MCF 10A (cell line): ENCODE measurements at regions of chr2 and their contacts with region 1.

Region 1: DNA sequence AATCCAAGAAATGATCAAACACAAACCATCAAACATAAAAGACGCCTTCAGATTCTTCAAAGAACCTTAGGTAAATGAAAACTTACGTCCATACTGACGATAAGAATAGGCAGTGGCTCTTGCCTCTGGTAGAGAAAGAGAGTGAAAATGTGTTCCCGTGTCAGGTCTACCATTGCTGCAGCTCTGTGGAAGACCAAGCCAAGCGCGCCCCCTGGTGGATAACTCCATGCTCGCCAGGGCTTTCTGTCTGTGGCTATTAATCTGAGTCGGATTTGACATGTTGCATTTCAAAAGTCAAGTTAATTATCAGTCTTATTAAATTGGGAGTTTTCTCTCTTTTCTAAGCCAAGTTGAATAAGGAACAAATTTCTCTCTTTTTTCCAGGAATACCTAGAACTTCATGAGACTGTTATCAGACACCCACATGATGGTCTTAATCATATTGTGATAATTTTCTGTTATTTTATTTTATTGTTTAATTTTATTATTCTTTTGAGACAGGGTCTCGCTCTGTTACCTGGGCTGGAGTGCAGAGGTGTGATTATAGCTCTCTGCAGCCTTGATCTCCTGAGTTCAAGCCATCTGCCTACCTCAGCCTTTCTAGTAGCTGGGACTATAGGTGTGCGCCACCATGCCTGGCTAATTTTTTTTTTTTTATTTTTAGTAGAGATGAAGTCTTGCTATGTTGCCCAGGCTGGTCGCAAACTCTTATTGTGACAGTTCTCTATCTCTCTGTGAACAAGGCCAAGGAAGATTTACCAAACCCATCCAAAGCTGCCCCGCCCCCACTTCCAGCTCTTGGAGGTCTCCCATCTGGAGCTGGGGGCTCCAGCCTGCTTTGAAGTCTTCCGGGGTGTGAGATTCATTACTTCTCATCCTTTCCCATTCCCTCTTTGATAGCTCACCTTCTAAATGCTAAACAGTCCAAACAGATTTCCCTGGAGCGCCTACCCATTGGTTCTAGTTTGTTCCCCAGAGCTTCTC is 15.8 kb upstream of the ZAP70 start:
- DNase-seq: peak; percentile 84
- H3K4me3 Mint-ChIP-seq: no peak overlapping the region
- H3K27ac Mint-ChIP-seq: no peak overlapping the region
- H3K4me1 Mint-ChIP-seq: peaks cover 14% of the 10 kb centered on the region
- H3K27me3 Mint-ChIP-seq: no peaks in the 10 kb centered on the region
- CTCF ChIP-seq: peak; percentile 92

Region 2: DNA sequence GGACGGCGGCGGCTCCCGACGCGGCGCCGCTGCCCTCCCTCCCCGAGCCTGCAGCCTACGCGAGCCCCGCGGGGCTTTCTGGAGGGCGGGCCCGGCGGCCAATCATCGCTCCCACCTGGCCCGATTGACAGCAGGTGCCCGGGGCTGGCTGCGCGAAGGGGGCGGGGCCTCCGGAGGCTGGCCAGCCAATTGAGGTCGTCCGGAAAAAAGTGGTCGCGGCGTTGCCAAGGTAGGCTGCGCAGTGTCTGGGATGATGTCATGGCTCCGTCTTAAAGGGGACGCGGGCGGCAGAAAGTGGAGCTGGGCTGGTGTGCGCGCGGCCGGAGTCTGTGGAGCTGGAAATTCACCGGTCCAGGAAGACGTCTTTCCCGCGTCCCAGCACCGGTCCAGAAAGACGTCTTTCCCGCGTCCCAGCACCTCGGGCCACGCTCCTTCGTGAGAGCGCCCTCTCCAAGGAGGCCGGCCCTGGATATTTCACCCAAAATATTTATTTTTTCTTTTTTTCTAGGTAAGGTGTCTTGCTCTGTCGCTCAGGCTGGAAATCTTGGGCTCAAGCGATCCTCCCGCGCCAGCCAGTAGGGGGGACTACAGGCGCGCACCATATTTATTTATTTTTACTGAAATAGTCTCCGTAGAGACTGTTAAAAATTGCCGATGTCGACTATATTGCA is 33.4 kb before region 1 on chr2 and contains the start of gene ACTR1B:
- CTCF ChIA-PET with region 1: interaction called, 65 read pairs
- POLR2A ChIA-PET with region 1: interaction called, 20 read pairs
- intact Hi-C with region 1: loop called (anchors 1 kb)
- DNase-seq: peak; percentile 98
- H3K4me3 Mint-ChIP-seq: peak within 1 kb of the TSS; percentile 88
- H3K27ac Mint-ChIP-seq: peak within 1 kb of the TSS; percentile 93
- H3K4me1 Mint-ChIP-seq: peaks cover 9% of the 10 kb centered on the region
- H3K27me3 Mint-ChIP-seq: no peaks in the 10 kb centered on the region
- CTCF ChIP-seq: no peak
- total RNA-seq, gene ACTR1B: 56.8 and 63.7 TPM in 2 replicates

Region 3: DNA sequence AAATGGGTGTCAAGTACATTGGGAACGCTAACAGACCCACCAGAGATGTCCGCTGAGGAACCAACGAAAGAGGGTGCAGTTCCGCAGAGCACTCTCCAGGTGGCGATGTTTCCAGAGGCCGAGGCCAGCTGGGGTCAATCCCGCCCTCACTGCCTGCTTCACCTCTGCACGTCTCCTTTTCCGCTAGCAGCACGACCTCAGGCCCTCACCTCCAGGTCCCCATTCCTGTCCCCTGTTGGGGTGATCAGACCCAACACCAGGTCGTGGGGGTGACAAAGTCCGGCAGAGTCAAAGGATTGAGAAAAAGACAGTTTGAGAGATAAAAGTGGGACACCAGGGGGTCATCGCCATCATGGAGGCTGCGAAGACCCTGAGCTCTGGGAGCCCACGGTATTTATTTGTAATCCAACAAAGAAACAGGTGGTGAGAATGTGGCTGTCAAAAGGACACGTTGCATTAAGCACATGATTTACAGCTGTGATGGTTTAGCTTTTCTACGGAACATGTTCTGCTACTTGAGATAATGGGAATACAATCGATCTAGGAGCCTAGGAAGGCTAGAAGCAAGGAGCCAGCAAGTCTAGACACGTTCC is 43.1 kb after region 1 on chr2:
- CTCF ChIA-PET with region 1: interaction called, 30 read pairs
- POLR2A ChIA-PET with region 1: no interaction called
- intact Hi-C with region 1: no loop called
- DNase-seq: peak; percentile 38
- H3K4me3 Mint-ChIP-seq: no peak overlapping the region
- H3K27ac Mint-ChIP-seq: no peak overlapping the region
- H3K4me1 Mint-ChIP-seq: peaks cover 23% of the 10 kb centered on the region
- H3K27me3 Mint-ChIP-seq: no peaks in the 10 kb centered on the region
- CTCF ChIP-seq: peak; percentile 61

Region 4: GRCh38 chr2:97806738-97807618 is 109.4 kb after region 1 on chr2:
- CTCF ChIA-PET with region 1: interaction called, 11 read pairs
- POLR2A ChIA-PET with region 1: no interaction called
- intact Hi-C with region 1: no loop called
- DNase-seq: peak; percentile 74
- H3K4me3 Mint-ChIP-seq: no peak overlapping the region
- H3K27ac Mint-ChIP-seq: no peak overlapping the region
- H3K4me1 Mint-ChIP-seq: no peaks in the 10 kb centered on the region
- H3K27me3 Mint-ChIP-seq: no peaks in the 10 kb centered on the region
- CTCF ChIP-seq: peak; percentile 97

Region 5: DNA sequence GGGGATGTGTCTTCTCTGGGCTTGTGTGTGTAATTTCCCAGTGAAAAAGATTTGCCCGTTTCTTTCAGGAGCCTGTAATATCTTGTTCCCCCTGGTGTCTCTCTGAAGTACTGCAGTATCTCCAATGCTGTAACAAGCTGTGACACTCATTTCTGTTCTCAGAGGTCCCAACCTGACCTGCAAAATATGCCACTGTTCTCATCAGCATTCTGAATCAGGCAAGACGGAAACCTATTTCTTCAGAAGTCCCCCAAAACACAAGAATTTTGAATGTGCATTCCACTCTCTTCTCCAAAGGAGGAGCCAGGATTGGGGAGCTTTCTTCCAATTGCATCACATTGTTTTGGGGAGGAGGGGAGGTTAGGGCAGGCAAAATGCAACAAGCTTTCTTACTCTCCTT is 571.7 kb after region 1 on chr2:
- CTCF ChIA-PET with region 1: interaction called, 14 read pairs
- POLR2A ChIA-PET with region 1: no interaction called
- intact Hi-C with region 1: loop called (anchors 2 kb)
- DNase-seq: peak; percentile 63
- H3K4me3 Mint-ChIP-seq: no peak overlapping the region
- H3K27ac Mint-ChIP-seq: peak overlapping the region; percentile 13
- H3K4me1 Mint-ChIP-seq: peaks cover 13% of the 10 kb centered on the region
- H3K27me3 Mint-ChIP-seq: no peaks in the 10 kb centered on the region
- CTCF ChIP-seq: peak; percentile 66